Posterior vena cava (tissue), 2 donors: ENCODE measurements at regions of chr15 and their contacts with region 1.

Region 1: GRCh38 chr15:64893481-64894394 is 18.0 kb upstream of the ANKDD1A start:
- DNase-seq: peak; percentile 97

Region 2: GRCh38 chr15:64841258-64842095 is 52.3 kb before region 1 on chr15 and contains the start of gene PLEKHO2:
- intact Hi-C with region 1: loop called (anchors 5 to 10 kb)
- DNase-seq: peak; percentile 99
- total RNA-seq, gene PLEKHO2: 40.9 to 50.1 TPM

Region 3: DNA sequence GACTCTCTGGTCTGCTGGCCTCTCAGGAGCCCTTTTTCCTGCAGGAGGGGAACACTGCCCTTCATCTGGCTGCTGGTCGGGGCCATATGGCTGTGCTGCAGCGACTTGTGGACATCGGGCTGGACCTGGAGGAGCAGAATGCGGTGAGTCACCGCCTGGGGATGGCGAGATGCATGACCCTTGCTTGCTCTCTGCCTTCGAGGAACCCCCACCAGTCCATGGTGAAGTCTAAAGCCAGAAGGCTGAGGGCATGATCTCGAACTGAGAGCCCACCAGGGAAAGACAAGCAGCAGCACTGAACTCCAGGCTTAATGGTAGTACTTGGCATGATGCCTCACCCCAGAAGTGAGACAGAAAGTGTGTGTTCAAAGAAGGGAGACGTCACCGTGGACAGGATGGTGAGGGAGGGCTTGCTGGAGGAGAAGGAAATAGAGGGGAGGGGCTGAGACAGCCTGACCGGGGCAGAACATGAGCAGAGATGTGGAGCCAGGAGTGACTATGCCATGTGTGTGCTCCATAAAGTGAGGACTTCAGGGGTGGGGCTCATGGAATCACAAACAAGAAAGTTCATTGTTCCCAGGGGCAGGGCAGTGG is 37.1 kb after region 1 on chr15:
- intact Hi-C with region 1: no loop called
- DNase-seq: no peak

Region 4: DNA sequence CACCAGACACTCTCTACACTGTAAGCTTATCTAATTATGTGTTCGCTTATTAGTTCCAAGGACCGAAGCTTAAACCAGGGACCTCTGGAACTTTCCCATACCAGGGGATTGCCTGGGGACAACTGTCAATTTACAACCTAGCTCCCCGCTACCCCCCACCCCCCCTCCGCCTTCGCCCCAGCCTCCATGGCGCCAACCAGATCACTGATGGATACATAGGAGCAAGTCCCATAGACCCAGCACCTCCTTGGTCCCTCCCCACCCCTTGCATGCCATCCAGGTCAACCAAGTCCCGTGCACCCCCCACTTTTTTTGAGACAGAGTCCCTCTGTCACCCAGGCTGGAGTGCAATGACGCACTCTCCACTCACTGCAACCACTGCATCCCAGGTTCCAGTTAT is 240.8 kb after region 1 on chr15:
- intact Hi-C with region 1: no loop called
- DNase-seq: no peak